ENCODE measurements at regions of chr2 and their contacts with region 1.

Region 1: DNA sequence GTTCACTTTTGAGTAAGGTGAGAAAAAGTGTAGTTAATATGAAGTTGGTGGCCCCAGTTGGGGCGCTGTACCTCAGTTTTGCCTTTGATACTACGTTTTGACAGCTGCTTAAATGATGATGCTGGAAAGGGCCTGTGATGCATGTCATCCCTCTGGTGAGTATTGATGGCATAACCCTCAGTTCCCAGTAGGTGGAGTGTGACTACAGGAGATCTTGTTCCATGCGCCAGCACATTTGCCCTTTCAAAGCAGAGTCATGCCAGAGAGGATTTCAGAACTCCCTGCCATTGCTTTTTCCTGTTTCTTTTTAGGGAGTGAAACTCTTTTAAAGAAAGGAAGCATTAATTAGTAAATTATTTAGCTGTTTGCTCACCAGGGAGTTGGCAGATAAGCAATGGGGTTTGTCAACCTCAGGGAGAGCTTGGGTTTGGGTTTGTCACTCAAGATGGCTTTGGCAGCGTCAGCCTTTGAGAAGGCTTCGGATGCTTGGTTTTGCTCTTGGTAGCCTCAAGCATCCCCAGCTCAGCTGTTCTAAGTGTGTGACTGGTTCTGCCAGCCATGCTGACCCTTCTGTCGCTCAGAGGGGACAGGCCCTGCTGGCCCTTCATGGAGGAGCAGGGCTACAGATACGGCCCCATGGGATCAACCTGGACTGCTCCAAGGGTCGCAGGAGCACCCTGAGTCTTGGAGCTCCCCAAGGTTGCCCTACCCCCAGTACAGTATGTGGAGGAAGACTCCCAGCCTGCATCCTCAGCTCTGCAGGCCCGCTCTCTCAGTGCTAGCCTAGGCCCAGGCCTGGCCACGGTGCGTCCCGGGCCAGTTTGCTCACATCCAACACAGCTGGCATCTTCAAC is 29.1 kb downstream of the ARMC9 start:
- DNase-seq: peak; percentile 85
- H3K4me3 ChIP-seq: peak overlapping the region in 1 of 2 experiments; percentile 45; a peak in 1 of 4 replicates
- H3K27ac ChIP-seq: no peak overlapping the region; a peak in 1 of 4 replicates
- H3K4me1 ChIP-seq: peaks cover 0 to 15% of the 10 kb centered on the region in 2 experiments; a peak in 2 of 4 replicates
- H3K27me3 ChIP-seq: no peaks in the 10 kb centered on the region
- CTCF ChIP-seq: peak; percentile 80
- EP300 ChIP-seq: no peak
- RAD21 ChIP-seq: peak; percentile 94

Region 2: GRCh38 chr2:231037731-231038482 is 189.6 kb before region 1 on chr2:
- CTCF ChIA-PET with region 1: no interaction called
- POLR2A ChIA-PET with region 1: no interaction called
- DNase-seq: peak; percentile 91
- H3K4me3 ChIP-seq: peak overlapping the region in 1 of 2 experiments; percentile 47; a peak in 2 of 4 replicates
- H3K27ac ChIP-seq: no peak overlapping the region
- H3K4me1 ChIP-seq: peaks cover 0 to 6% of the 10 kb centered on the region in 2 experiments; a peak in 1 of 4 replicates
- H3K27me3 ChIP-seq: peaks cover 32% of the 10 kb centered on the region
- CTCF ChIP-seq: no peak
- EP300 ChIP-seq: no peak
- RAD21 ChIP-seq: no peak

Region 3: GRCh38 chr2:231191896-231192872 is 35.4 kb before region 1 on chr2:
- CTCF ChIA-PET with region 1: interaction called, 10 read pairs
- POLR2A ChIA-PET with region 1: no interaction called
- DNase-seq: peak; percentile 89
- H3K4me3 ChIP-seq: no peak overlapping the region
- H3K27ac ChIP-seq: peak overlapping the region; percentile 29 to 70; a peak in 3 of 4 replicates
- H3K4me1 ChIP-seq: peaks cover 7 to 15% of the 10 kb centered on the region in 2 experiments; a peak in 1 of 4 replicates
- H3K27me3 ChIP-seq: no peaks in the 10 kb centered on the region
- CTCF ChIP-seq: peak; percentile 81
- EP300 ChIP-seq: peak in 1 of 2 experiments; percentile 36; a peak in 1 of 4 replicates
- RAD21 ChIP-seq: peak; percentile 94

Region 4: DNA sequence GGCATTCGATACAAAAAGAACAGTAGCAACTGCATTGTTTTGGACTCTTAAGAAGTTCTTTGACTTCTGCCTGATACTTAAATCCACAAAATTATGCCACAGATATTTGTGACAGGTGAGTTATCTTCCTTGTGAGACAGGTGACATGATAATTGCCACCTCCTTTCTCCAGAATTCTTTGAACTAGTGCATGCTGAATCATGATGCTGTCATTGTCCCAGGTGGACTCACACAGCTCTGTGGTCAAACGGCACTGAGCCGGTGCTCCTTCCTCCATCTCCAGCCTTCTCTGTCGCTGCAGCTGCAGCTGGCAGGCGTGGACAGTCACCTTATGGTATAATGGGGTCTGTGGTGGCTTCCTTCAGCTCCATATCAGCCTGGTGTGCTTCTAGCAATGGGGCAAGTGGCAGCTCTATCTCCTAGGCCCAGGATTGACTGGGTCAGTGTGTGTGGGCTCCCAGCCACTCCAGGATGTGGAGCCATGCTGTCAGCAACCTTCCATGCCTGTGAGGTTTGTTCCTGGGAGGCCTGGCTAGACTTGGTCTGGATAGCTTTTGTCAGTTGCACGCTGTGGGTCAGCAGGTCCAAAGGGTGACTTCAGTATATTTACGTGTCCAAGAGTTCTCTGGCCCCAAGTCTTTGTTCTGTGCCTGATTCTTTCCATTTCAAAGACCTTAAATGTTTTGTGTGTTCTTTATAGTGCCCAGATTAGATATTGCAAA is 13.5 kb before region 1 on chr2:
- CTCF ChIA-PET with region 1: interaction called, 21 read pairs
- POLR2A ChIA-PET with region 1: no interaction called
- DNase-seq: no peak
- H3K4me3 ChIP-seq: no peak overlapping the region
- H3K27ac ChIP-seq: no peak overlapping the region
- H3K4me1 ChIP-seq: no peaks in the 10 kb centered on the region
- H3K27me3 ChIP-seq: no peaks in the 10 kb centered on the region
- CTCF ChIP-seq: no peak
- EP300 ChIP-seq: no peak
- RAD21 ChIP-seq: no peak

Region 5: DNA sequence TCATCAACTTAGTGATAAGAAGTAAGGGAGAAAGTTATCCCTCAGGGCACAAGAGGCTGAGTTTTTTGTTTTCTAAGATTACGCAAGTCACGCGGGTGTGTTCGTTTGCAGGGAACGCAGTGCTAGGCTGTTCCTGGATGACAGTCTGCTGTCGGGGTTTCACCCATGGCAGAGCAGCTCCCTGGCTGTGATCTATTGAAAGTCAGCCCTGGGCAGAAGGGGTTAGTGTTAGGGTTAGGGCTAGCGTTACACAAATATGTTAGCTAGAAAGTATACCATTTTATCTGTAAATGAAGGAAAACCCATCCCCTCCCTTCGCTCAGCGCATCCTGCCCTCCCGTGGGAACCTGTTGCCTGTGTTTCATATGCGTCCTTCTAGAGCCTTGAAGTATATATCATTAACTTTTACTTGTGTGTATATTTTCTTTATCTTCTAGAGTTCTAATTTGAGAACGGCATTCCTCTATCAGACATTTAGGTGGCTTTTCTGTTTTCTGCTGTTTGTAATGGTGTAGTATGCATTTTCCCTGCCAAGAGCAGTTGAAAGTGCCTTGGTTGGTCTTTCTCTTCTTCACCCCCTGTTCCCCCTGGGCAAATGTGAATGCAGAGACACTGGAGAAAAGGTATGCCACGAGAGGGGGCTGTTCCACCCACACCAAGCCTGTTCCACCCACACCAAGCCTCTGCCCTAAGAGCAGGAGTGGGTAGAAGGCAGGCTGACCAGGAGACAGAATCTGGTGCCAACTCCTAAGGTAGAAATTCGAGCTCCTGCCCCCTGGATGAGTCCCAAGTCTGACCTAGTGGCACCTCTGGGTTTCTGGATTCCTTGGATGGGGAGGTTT is 17.9 kb after region 1 on chr2:
- CTCF ChIA-PET with region 1: interaction called, 24 read pairs
- POLR2A ChIA-PET with region 1: interaction called, 3 read pairs
- DNase-seq: no peak
- H3K4me3 ChIP-seq: no peak overlapping the region
- H3K27ac ChIP-seq: no peak overlapping the region
- H3K4me1 ChIP-seq: no peaks in the 10 kb centered on the region
- H3K27me3 ChIP-seq: no peaks in the 10 kb centered on the region
- CTCF ChIP-seq: peak; percentile 20; the same call in 1 of the 2 replicates
- EP300 ChIP-seq: no peak
- RAD21 ChIP-seq: no peak

Region 6: GRCh38 chr2:231280846-231281245 is 53.3 kb after region 1 on chr2:
- CTCF ChIA-PET with region 1: interaction called, 12 read pairs
- POLR2A ChIA-PET with region 1: no interaction called
- DNase-seq: no peak
- H3K4me3 ChIP-seq: no peak overlapping the region
- H3K27ac ChIP-seq: no peak overlapping the region
- H3K4me1 ChIP-seq: no peaks in the 10 kb centered on the region
- H3K27me3 ChIP-seq: no peaks in the 10 kb centered on the region
- CTCF ChIP-seq: no peak
- EP300 ChIP-seq: no peak
- RAD21 ChIP-seq: no peak

Region 7: GRCh38 chr2:231399853-231400680 is 172.5 kb after region 1 on chr2:
- CTCF ChIA-PET with region 1: interaction called, 250 read pairs
- POLR2A ChIA-PET with region 1: no interaction called
- DNase-seq: peak; percentile 88
- H3K4me3 ChIP-seq: no peak overlapping the region
- H3K27ac ChIP-seq: peak overlapping the region in 1 of 2 experiments; percentile 72; a peak in 2 of 4 replicates
- H3K4me1 ChIP-seq: peaks cover 0 to 20% of the 10 kb centered on the region in 2 experiments; a peak in 1 of 4 replicates
- H3K27me3 ChIP-seq: no peaks in the 10 kb centered on the region
- CTCF ChIP-seq: no peak
- EP300 ChIP-seq: 0 out of 4 replicates have a peak, but pooled peaks of 1 of the 2 experiments have one; percentile 6
- RAD21 ChIP-seq: peak; percentile 47

Region 8: GRCh38 chr2:231452799-231453508 is 225.4 kb after region 1 on chr2:
- CTCF ChIA-PET with region 1: interaction called, 115 read pairs
- POLR2A ChIA-PET with region 1: no interaction called
- DNase-seq: no peak
- H3K4me3 ChIP-seq: no peak overlapping the region
- H3K27ac ChIP-seq: no peak overlapping the region
- H3K4me1 ChIP-seq: no peaks in the 10 kb centered on the region
- H3K27me3 ChIP-seq: no peaks in the 10 kb centered on the region
- CTCF ChIP-seq: no peak
- EP300 ChIP-seq: no peak
- RAD21 ChIP-seq: no peak